HCT116 (cell line): ENCODE measurements at regions of chr10 and their contacts with region 1.

Region 1: DNA sequence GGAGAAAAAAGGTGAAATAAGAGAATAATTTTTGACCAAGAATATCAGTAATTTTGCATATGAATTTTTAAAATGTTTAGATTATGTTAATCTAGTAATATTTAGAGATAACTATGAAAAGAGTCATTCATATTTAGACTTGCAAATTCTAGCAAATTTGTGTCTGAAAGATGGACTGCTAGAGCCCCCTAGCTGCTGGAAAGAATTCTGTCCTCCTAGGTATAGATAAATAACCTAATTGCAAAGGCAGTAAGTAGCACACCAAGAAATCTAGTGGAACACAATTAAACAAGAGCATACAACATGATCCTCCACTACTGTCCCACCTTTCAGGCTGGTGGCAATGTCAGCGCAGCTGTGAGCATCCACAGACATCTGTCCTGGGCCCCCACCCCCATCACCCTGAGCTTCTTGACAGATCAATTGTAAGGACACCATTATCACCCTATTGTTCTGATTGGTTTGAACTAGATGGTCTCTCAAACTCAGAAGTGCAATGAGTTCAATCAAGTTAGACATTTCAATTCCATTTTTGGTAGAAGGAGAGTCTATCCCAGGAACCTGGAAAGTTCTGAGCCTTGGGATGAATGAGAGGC is 15.0 kb upstream of the GFRA1 start:
- DNase-seq: peak; percentile 37
- ATAC-seq: peak; percentile 75
- H3K4me3 ChIP-seq: no peak overlapping the region
- H3K27ac ChIP-seq: no peak overlapping the region
- H3K4me1 ChIP-seq: no peaks in the 10 kb centered on the region
- H3K27me3 ChIP-seq: peaks cover 49% of the 10 kb centered on the region
- CTCF ChIP-seq: peak; percentile 69 to 80 (median 77)
- POLR2A ChIP-seq: no peak
- RAD21 ChIP-seq: peak; percentile 80

Region 2: DNA sequence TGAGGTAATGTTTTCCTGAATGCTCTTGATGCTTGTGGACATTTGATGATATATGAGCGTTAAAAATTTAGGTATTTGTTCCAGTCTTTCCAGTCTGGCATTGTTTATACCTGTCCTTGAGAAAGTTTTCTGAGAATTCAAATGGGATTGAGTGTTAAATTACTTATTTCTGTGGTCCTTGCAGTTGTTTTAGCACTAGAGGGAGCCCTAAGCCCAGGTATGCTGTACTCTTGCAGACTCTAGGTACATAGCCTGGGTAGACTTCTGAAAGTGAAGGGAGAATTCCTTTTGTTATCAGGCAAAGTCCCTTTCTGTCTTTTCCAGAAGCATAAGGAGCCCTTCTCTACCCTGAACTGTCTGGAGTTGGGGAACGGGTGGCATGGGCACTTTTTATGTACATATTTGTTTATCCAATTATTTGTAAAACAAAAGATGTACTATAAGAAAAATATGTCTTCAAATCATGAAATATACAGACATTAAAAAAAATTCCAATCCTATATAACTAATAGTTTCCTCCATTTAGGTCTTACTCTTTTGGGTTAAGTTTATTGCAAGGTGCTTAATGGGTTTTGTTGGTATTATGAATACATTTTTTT is 932.7 kb before region 1 on chr10:
- CTCF ChIA-PET with region 1: interaction called, 3 read pairs
- POLR2A ChIA-PET with region 1: no interaction called
- RAD21 ChIA-PET with region 1: no interaction called
- intact Hi-C with region 1: loop called (anchors 1 kb)
- DNase-seq: peak; percentile 81
- ATAC-seq: peak; percentile 96
- H3K4me3 ChIP-seq: no peak overlapping the region
- H3K27ac ChIP-seq: no peak overlapping the region
- H3K4me1 ChIP-seq: no peaks in the 10 kb centered on the region
- H3K27me3 ChIP-seq: peaks cover 5% of the 10 kb centered on the region; the same call in 1 of the 2 replicates
- CTCF ChIP-seq: peak; percentile 77 to 93 (median 84); a peak in 5 of 6 replicates
- POLR2A ChIP-seq: no peak
- RAD21 ChIP-seq: peak; percentile 95

Region 3: DNA sequence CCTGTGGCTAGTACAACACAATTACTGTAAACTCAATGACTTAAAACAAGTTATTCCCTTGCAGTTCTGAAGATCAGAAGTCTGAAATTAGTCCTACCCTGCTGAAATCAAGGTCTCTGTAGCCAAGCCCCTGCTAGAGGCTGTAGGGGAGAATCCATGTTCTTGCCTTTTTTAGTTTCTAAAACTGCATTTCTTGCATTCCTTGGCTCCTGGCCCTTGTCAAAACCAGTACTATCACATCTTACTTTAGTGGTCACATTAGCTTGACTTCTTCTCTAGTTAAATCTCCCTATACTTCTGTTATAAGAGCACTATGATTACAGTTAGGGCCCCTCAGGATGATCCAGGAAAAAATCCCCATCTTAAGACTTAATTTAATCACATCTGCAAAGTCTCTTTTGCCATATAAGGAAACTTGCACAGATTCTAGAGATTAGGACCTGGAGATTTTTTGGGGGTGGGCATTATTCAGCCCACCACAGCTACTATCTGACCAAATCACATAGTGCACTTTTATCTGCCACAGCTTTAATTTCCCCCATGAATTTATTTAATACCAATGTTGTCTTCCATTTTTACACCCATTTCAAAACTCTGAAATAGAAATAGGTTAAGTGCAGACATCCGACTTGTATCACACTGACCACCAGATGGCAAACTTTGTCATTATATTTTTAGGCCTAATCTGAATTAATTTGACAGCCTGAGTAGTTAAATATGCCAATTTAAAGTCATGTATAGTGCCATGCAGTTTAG is 581.8 kb before region 1 on chr10:
- CTCF ChIA-PET with region 1: interaction called, 24 read pairs
- POLR2A ChIA-PET with region 1: no interaction called
- RAD21 ChIA-PET with region 1: no interaction called
- intact Hi-C with region 1: loop called (anchors 1 kb)
- DNase-seq: peak; percentile 12
- ATAC-seq: peak; percentile 72
- H3K4me3 ChIP-seq: no peak overlapping the region
- H3K27ac ChIP-seq: no peak overlapping the region
- H3K4me1 ChIP-seq: no peaks in the 10 kb centered on the region
- H3K27me3 ChIP-seq: peaks cover 19% of the 10 kb centered on the region; the same call in 1 of the 2 replicates
- CTCF ChIP-seq: peak; percentile 28 to 84 (median 58); a peak in 5 of 6 replicates
- POLR2A ChIP-seq: no peak
- RAD21 ChIP-seq: peak; percentile 58

Region 4: GRCh38 chr10:115948465-115948864 is 339.5 kb before region 1 on chr10:
- CTCF ChIA-PET with region 1: no interaction called
- POLR2A ChIA-PET with region 1: no interaction called
- RAD21 ChIA-PET with region 1: no interaction called
- intact Hi-C with region 1: loop called (anchors 10 kb)
- DNase-seq: no peak
- ATAC-seq: peak; percentile 67
- H3K4me3 ChIP-seq: no peak overlapping the region
- H3K27ac ChIP-seq: no peak overlapping the region
- H3K4me1 ChIP-seq: no peaks in the 10 kb centered on the region
- H3K27me3 ChIP-seq: peaks cover 20% of the 10 kb centered on the region
- CTCF ChIP-seq: peak in 2 of 3 experiments; percentile 31 to 34; a peak in 2 of 6 replicates
- POLR2A ChIP-seq: no peak
- RAD21 ChIP-seq: no peak